ENCODE measurements at regions of chr3 and their contacts with region 1.

Region 1: GRCh38 chr3:179071550-179072397 is at the start of gene ZMAT3:
- DNase-seq: peak; percentile 92
- H3K4me3 ChIP-seq: peak within 1 kb of the TSS; percentile 60 to 92 (median 75)
- H3K27ac ChIP-seq: peak within 1 kb of the TSS; percentile 87 to 96 (median 92)
- H3K4me1 ChIP-seq: peaks cover 0 to 29% (median 22%) of the 10 kb centered on the region in 4 donors
- H3K27me3 ChIP-seq: no peaks in the 10 kb centered on the region
- CTCF ChIP-seq: no peak
- EP300 ChIP-seq: no peak
- POLR2A ChIP-seq: no peak
- total RNA-seq, gene ZMAT3: 12.4 to 16.9 (median 14.7) TPM

Region 2: GRCh38 chr3:178676942-178677790 is 394.6 kb before region 1 on chr3:
- intact Hi-C with region 1: no loop called
- DNase-seq: no peak
- H3K4me3 ChIP-seq: no peak overlapping the region
- H3K27ac ChIP-seq: no peak overlapping the region
- H3K4me1 ChIP-seq: peaks cover 0 to 4% (median 2%) of the 10 kb centered on the region in 4 donors
- H3K27me3 ChIP-seq: no peaks in the 10 kb centered on the region
- CTCF ChIP-seq: no peak
- EP300 ChIP-seq: no peak
- POLR2A ChIP-seq: no peak

Region 3: DNA sequence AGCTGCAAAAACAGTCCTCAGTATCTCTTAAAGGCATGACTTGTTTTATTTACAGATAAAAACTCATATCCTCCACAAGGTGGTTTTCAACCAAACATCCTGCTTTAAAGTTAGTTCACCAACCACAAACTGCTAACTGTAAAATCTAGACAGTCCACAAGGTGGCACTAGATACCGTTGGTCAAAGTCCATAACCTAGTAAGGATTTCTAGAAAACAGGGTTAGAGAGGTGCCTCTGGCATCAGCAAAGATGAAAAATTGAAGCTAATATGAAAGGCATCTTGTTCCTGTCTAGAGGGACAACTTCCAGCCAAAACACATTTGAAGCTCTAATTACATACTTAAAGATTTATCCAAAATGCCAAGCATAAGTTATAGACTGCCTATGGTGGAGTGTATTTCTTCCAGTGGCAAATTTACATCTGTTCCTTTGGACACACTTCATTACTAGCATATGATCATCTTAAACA is 56.2 kb before region 1 on chr3:
- intact Hi-C with region 1: loop called (anchors 2 kb)
- DNase-seq: no peak
- H3K4me3 ChIP-seq: no peak overlapping the region
- H3K27ac ChIP-seq: no peak overlapping the region
- H3K4me1 ChIP-seq: peaks cover 0 to 11% (median 10%) of the 10 kb centered on the region in 4 donors
- H3K27me3 ChIP-seq: no peaks in the 10 kb centered on the region
- CTCF ChIP-seq: peak; percentile 62 to 92 (median 85)
- EP300 ChIP-seq: no peak
- POLR2A ChIP-seq: no peak

Region 4: GRCh38 chr3:179098388-179099077 is 26.8 kb after region 1 on chr3:
- intact Hi-C with region 1: loop called (anchors 2 kb)
- DNase-seq: no peak
- H3K4me3 ChIP-seq: peak overlapping the region; percentile 4 to 41 (median 33)
- H3K27ac ChIP-seq: peak overlapping the region in 2 of 4 donors; percentile 59 to 63
- H3K4me1 ChIP-seq: peaks cover 0 to 6% (median 0%) of the 10 kb centered on the region in 4 donors
- H3K27me3 ChIP-seq: no peaks in the 10 kb centered on the region
- CTCF ChIP-seq: peak in 3 of 4 experiments; percentile 18 to 32 (median 32)
- EP300 ChIP-seq: no peak
- POLR2A ChIP-seq: no peak

Measured in sigmoid colon (tissue), 7 donors.